ENCODE measurements at regions of chr3 and their contacts with region 1.

Region 1: DNA sequence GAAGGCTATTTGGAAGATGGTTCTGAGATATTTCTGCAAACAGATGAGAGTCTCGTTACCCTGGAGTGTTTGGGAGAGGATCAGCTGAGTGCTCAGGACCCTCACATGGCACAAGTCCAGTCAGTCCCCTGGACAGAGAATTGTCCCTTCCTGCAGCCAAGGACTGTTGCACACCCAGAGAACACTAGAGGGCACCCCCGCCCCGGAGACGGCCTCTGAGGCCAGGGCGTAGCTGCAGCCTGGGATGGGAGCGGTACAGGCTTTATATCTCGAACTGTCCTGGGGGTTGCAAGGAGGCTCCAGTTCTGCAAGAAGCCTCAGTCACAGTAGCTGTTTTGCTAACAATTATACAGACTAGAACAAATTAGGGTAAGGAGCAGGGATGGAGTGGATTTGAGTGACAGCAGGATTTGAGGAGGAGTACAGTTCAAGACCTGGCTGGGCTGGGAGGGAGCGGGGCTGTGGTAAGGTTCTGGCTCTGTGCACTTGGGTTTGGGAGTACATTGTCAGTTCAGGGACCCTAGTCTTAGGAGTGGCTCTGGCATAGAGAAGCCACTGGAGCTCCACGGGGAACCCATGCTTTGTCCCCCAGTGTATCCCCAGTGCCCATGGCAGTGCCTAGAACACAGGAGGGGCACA is 67.6 kb upstream of the HACD2 start:
- DNase-seq: peak; percentile 75
- H3K4me3 Mint-ChIP-seq: no peak overlapping the region
- H3K27ac Mint-ChIP-seq: no peak overlapping the region
- H3K4me1 Mint-ChIP-seq: peaks cover 17% of the 10 kb centered on the region
- H3K27me3 Mint-ChIP-seq: no peaks in the 10 kb centered on the region
- CTCF ChIP-seq: peak; percentile 91

Region 2: GRCh38 chr3:123584988-123585937 is 67.2 kb before region 1 on chr3 and contains the start of gene HACD2:
- CTCF ChIA-PET with region 1: interaction called, 26 read pairs
- POLR2A ChIA-PET with region 1: interaction called, 4 read pairs
- intact Hi-C with region 1: loop called (anchors 10 kb)
- DNase-seq: peak; percentile 98
- H3K4me3 Mint-ChIP-seq: no peak within 1 kb of the TSS
- H3K27ac Mint-ChIP-seq: no peak within 1 kb of the TSS
- H3K4me1 Mint-ChIP-seq: peaks cover 30% of the 10 kb centered on the region
- H3K27me3 Mint-ChIP-seq: no peaks in the 10 kb centered on the region
- CTCF ChIP-seq: no peak
- total RNA-seq, gene HACD2: 76.5 and 97.7 TPM in 2 replicates

Region 3: DNA sequence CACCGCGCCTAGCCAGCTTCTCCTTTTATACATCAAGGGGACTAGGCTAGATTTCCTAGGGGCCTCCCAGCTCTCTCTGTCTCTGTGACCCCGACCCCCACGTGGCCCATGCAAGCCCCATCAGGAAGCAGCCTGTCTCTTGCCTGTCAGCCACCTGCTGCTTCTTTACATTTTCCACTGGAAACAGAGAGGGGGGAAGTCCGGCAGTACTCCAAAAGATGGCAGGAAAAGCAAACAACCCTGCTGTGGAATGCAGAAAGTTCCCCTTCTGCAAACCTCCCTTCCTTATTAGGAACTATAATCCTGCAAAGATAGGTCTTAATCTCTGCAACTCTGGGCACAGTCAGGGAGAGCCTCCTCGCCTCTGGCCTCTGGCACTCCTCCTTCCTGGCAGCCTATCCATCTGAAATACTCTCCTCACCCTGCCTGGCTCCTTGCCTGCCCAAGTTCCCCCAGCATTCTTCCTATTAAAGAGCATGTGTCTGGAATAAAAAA is 20.3 kb before region 1 on chr3:
- CTCF ChIA-PET with region 1: interaction called, 13 read pairs
- POLR2A ChIA-PET with region 1: no interaction called
- intact Hi-C with region 1: no loop called
- DNase-seq: no peak
- H3K4me3 Mint-ChIP-seq: no peak overlapping the region
- H3K27ac Mint-ChIP-seq: no peak overlapping the region
- H3K4me1 Mint-ChIP-seq: peaks cover 6% of the 10 kb centered on the region
- H3K27me3 Mint-ChIP-seq: no peaks in the 10 kb centered on the region
- CTCF ChIP-seq: no peak

Region 4: GRCh38 chr3:123672429-123673146 is 20.1 kb after region 1 on chr3:
- CTCF ChIA-PET with region 1: interaction called, 46 read pairs
- POLR2A ChIA-PET with region 1: no interaction called
- intact Hi-C with region 1: no loop called
- DNase-seq: no peak
- H3K4me3 Mint-ChIP-seq: no peak overlapping the region
- H3K27ac Mint-ChIP-seq: no peak overlapping the region
- H3K4me1 Mint-ChIP-seq: no peaks in the 10 kb centered on the region
- H3K27me3 Mint-ChIP-seq: peaks cover 82% of the 10 kb centered on the region
- CTCF ChIP-seq: no peak

Region 5: DNA sequence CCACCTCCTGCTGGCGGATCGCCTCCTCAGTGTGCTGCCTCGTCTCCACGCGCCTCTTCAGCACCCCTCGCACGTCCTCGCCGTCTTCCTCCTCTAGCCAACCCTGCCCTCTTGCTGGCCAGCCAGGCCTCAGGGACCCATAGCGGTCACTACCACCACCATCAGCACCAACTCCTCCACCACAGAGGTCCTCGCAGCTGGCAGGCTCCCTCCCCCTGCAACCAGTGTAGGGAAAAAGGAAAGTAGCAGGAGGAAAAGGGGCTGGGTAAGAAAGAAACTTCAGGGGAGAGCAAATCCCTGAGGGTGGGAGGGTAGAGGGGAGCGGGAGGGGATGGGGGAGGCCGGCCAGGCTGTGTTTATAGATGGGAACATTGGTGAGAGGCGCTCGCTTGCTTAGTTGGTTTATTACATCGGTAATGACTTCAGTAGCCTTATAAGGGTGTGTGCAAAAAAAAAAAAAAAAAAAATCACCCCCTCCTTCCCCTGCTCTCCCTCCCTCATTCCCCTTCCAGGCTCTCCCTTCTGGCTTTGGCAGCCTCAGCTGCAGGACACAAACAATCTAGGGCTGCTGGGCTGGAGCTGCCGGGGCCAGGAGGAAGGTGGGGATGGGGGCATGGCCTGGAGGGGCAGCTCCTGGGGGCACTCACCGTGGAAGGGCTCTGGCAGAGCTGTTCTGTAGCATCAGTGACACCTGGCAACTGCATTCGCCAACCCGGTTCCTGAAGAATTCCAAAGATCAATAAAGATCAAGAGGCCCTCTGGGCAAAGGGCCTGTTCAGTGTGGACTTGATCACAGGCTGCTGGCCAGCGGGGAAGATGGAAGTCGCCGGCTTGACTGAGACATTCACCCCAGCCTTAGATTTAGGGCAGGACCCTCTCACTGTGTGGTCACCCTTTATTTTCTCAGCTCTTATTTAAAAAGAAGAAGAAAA is 48.6 kb after region 1 on chr3:
- CTCF ChIA-PET with region 1: interaction called, 162 read pairs
- POLR2A ChIA-PET with region 1: interaction called, 4 read pairs
- intact Hi-C with region 1: loop called (anchors 1 kb)
- DNase-seq: no peak
- H3K4me3 Mint-ChIP-seq: no peak overlapping the region
- H3K27ac Mint-ChIP-seq: no peak overlapping the region
- H3K4me1 Mint-ChIP-seq: peaks cover 5% of the 10 kb centered on the region
- H3K27me3 Mint-ChIP-seq: no peaks in the 10 kb centered on the region
- CTCF ChIP-seq: no peak

Region 6: GRCh38 chr3:123984957-123985356 is 332.5 kb after region 1 on chr3:
- CTCF ChIA-PET with region 1: interaction called, 17 read pairs
- POLR2A ChIA-PET with region 1: no interaction called
- intact Hi-C with region 1: loop called (anchors 5 kb)
- DNase-seq: no peak
- H3K4me3 Mint-ChIP-seq: no peak overlapping the region
- H3K27ac Mint-ChIP-seq: no peak overlapping the region
- H3K4me1 Mint-ChIP-seq: no peaks in the 10 kb centered on the region
- H3K27me3 Mint-ChIP-seq: peaks cover 91% of the 10 kb centered on the region
- CTCF ChIP-seq: no peak

Region 7: DNA sequence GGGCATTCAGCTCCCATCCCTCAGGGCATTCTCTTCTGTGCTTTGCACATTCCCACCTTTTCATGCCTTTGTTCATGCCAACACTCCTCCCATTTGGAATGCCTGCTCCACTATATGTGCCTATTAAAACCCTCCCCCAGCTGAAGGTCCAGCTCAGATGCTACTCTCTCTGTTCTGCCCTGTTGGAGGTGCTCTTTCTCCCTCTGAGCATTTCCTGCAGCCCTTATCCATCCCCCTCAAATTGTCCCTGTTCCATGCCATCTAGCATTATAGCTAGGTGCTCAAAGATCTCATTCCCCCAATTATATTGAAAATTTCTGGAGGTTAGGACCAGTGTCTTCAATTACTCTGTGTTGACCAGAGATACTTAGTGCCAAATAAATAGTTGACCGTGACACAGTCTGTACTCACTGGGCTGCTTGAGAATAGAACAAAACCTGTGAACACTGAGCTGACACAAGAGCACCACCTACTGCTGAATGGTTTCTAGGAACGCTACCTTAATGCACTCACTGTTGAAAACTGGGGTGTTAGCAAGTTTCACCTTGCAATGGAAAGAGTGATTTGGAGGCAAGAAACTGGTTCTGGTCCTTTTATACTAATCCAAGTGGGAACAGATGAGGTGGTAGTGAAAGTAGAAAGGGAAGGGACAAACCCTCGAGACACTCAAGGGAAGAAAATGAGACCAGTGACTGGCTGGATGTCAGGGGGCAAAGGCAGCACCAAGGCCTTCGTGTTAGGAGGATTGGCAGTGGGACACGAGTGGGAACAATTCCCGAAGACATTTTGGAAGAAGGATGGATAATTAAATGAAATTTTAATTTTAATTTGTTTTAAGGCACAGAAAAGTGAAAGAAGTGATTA is 629.2 kb after region 1 on chr3:
- CTCF ChIA-PET with region 1: no interaction called
- POLR2A ChIA-PET with region 1: no interaction called
- intact Hi-C with region 1: loop called (anchors 10 kb)
- DNase-seq: peak; percentile 60
- H3K4me3 Mint-ChIP-seq: no peak overlapping the region
- H3K27ac Mint-ChIP-seq: no peak overlapping the region
- H3K4me1 Mint-ChIP-seq: peaks cover 6% of the 10 kb centered on the region
- H3K27me3 Mint-ChIP-seq: peaks cover 73% of the 10 kb centered on the region
- CTCF ChIP-seq: peak; percentile 74